AG04450 (cell line): ENCODE measurements at regions of chr17 and their contacts with region 1.

Region 1: GRCh38 chr17:34361478-34362061 is 1.5 kb downstream of the CCL1 start:
- DNase-seq: peak; percentile 72
- H3K4me3 ChIP-seq: no peak overlapping the region
- H3K27ac ChIP-seq: no peak overlapping the region
- H3K27me3 ChIP-seq: peaks cover 9% of the 10 kb centered on the region
- CTCF ChIP-seq: peak; percentile 100

Region 2: DNA sequence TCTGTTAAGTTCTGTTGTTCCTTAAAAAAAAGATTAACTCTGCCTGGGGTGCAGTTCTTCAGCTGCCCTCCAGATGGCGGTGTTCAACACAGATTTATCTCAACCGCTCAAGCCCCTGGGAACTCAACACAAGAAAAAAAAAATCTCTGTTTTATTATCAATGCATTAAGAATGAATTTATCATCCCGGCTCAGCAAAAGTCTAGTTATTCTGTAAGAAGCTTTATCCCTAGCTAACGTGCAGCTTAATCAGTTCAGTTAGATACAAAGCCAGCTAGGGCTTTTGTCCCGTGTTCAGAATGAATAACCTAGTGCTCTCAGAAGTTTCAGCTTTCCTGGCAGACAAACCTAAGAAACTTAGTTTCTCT is 582.4 kb before region 1 on chr17:
- CTCF ChIA-PET with region 1: interaction called, 41 read pairs
- POLR2A ChIA-PET with region 1: no interaction called
- DNase-seq: peak; percentile 45
- H3K4me3 ChIP-seq: no peak overlapping the region
- H3K27ac ChIP-seq: no peak overlapping the region
- H3K27me3 ChIP-seq: no peaks in the 10 kb centered on the region
- CTCF ChIP-seq: peak; percentile 92

Region 3: GRCh38 chr17:34171245-34171818 is 190.2 kb before region 1 on chr17:
- CTCF ChIA-PET with region 1: interaction called, 124 read pairs
- POLR2A ChIA-PET with region 1: no interaction called
- DNase-seq: no peak
- H3K4me3 ChIP-seq: no peak overlapping the region
- H3K27ac ChIP-seq: no peak overlapping the region
- H3K27me3 ChIP-seq: no peaks in the 10 kb centered on the region
- CTCF ChIP-seq: peak; percentile 81

Region 4: GRCh38 chr17:34226011-34226743 is 135.4 kb before region 1 on chr17:
- CTCF ChIA-PET with region 1: interaction called, 54 read pairs
- POLR2A ChIA-PET with region 1: no interaction called
- DNase-seq: no peak
- H3K4me3 ChIP-seq: no peak overlapping the region
- H3K27ac ChIP-seq: no peak overlapping the region
- H3K27me3 ChIP-seq: peaks cover 4% of the 10 kb centered on the region
- CTCF ChIP-seq: no peak

Region 5: GRCh38 chr17:34254651-34255380 is 106.8 kb before region 1 on chr17 and contains the start of gene CCL2:
- CTCF ChIA-PET with region 1: interaction called, 47 read pairs
- POLR2A ChIA-PET with region 1: interaction called, 10 read pairs
- DNase-seq: peak; percentile 65
- H3K4me3 ChIP-seq: peak within 1 kb of the TSS; percentile 79
- H3K27ac ChIP-seq: peak within 1 kb of the TSS; percentile 94
- H3K27me3 ChIP-seq: no peaks in the 10 kb centered on the region
- CTCF ChIP-seq: no peak
- polyA plus RNA-seq, gene CCL2: 119 and 176 TPM in 2 replicates

Region 6: DNA sequence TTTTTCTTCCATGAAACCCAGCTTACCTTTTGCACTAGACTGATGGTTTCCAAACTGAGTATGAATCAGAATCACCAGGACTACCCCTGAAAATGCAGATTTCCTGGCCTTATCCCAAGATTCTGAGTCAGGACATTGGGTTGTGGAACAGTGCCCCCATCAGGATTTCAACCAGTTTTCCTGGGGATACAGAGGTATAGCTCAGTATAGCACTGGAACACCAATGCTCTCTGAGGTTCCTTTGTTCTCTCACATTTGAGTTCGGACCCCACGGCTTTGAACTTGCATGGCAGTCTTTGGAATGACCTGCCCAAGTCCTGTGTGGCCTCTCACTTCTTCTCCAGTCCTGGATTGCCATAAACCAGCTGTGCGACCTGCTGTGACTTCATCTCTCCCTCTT is 55.1 kb before region 1 on chr17:
- CTCF ChIA-PET with region 1: interaction called, 192 read pairs
- POLR2A ChIA-PET with region 1: no interaction called
- DNase-seq: no peak
- H3K4me3 ChIP-seq: no peak overlapping the region
- H3K27ac ChIP-seq: peak overlapping the region; percentile 0
- H3K27me3 ChIP-seq: no peaks in the 10 kb centered on the region
- CTCF ChIP-seq: peak; percentile 61

Region 7: GRCh38 chr17:34378664-34379101 is 17.1 kb after region 1 on chr17:
- CTCF ChIA-PET with region 1: interaction called, 34 read pairs
- POLR2A ChIA-PET with region 1: no interaction called
- DNase-seq: no peak
- H3K4me3 ChIP-seq: no peak overlapping the region
- H3K27ac ChIP-seq: no peak overlapping the region
- H3K27me3 ChIP-seq: peaks cover 4% of the 10 kb centered on the region
- CTCF ChIP-seq: 0 out of 2 replicates have a peak, but pooled peaks have one; percentile 6